Activated CD4-positive, alpha-beta memory T cell treated with anti-CD3 and anti-CD28 coated beads for 36 hours (primary cell): ENCODE measurements at regions of chr12 and their contacts with region 1.

Region 1: DNA sequence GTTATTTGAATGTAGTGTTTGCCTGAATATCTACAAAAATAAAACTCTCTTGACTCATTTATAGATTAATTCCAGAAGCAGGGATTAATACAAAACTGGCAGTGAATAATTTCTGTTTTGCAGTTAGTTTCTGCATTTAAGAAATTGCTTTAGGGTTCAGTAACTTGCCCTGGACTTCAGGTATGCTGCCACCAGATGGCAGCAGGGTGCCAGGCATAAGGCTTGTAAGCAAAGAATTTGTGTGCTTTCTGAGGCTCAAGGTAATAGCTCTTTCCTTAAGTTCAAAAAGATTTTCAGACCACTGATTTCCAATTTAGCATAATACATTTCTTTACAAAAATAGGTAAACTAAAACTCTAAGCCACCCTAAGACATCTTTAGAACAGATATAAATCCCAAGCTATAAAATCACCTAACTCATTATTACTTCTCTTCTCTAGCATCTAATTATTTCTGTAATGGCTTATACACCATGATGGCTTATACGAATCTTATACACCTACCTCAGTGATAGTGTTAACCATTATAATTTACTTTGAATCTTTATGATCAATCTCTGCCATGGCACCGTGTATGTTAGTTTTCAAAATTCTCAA is 398.3 kb downstream of the APAF1 start:
- DNase-seq: peak; percentile 62
- H3K4me3 Mint-ChIP-seq: no peak overlapping the region
- H3K27ac Mint-ChIP-seq: no peak overlapping the region
- H3K4me1 Mint-ChIP-seq: no peaks in the 10 kb centered on the region
- H3K27me3 Mint-ChIP-seq: peaks cover 3% of the 10 kb centered on the region

Region 2: GRCh38 chr12:98968896-98969295 is 74.5 kb before region 1 on chr12:
- CTCF ChIA-PET with region 1: no interaction called
- POLR2A ChIA-PET with region 1: no interaction called
- intact Hi-C with region 1: no loop called
- DNase-seq: no peak
- H3K4me3 Mint-ChIP-seq: no peak overlapping the region
- H3K27ac Mint-ChIP-seq: no peak overlapping the region
- H3K4me1 Mint-ChIP-seq: no peaks in the 10 kb centered on the region
- H3K27me3 Mint-ChIP-seq: no peaks in the 10 kb centered on the region

Region 3: GRCh38 chr12:99053616-99054362 is 10.4 kb after region 1 on chr12:
- CTCF ChIA-PET with region 1: interaction called, 14 read pairs
- POLR2A ChIA-PET with region 1: no interaction called
- intact Hi-C with region 1: no loop called
- DNase-seq: no peak
- H3K4me3 Mint-ChIP-seq: no peak overlapping the region
- H3K27ac Mint-ChIP-seq: no peak overlapping the region
- H3K4me1 Mint-ChIP-seq: no peaks in the 10 kb centered on the region
- H3K27me3 Mint-ChIP-seq: no peaks in the 10 kb centered on the region

Region 4: DNA sequence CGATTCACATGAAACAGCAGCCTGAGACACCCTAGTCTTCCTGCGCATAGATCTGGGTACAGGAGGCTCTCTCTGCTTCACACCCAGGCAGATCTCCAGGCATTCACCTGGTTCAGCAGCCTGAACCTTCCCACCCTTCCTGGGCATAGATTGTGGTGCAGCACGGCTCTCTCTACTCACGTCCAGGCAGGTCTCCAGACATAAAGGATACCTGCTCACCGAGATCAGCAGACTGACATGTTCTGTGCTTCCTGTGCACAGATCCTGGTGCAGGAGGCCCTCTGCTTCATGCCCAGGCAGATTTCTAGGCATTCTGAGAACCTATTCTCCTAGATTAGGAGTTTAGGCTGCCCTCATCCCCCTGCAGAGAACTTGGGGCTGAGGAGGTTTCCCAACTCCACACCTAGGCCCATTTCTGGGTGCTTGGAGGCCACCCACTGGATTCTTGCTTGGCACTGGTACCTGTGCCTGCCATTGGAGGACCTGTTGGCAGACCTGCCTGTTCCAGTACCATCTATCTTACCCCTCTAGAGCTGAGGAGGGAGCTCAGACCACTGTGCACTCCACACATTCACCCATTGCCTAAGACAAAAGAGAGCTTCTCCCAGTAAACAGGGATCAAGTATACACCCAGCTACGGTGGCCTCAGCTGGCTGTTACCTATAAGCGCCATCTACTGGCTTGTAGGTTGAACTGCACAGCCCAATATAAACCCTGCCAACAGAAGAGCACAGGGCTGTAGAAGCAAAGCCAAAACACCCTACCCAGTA is 576.2 kb after region 1 on chr12:
- CTCF ChIA-PET with region 1: no interaction called
- POLR2A ChIA-PET with region 1: no interaction called
- intact Hi-C with region 1: loop called (anchors 2 kb)
- DNase-seq: no peak
- H3K4me3 Mint-ChIP-seq: no peak overlapping the region
- H3K27ac Mint-ChIP-seq: no peak overlapping the region
- H3K4me1 Mint-ChIP-seq: no peaks in the 10 kb centered on the region
- H3K27me3 Mint-ChIP-seq: no peaks in the 10 kb centered on the region

Region 5: GRCh38 chr12:99767809-99768208 is 724.4 kb after region 1 on chr12:
- CTCF ChIA-PET with region 1: interaction called, 9 read pairs
- POLR2A ChIA-PET with region 1: no interaction called
- intact Hi-C with region 1: loop called (anchors 5 kb)
- DNase-seq: no peak
- H3K4me3 Mint-ChIP-seq: no peak overlapping the region
- H3K27ac Mint-ChIP-seq: no peak overlapping the region
- H3K4me1 Mint-ChIP-seq: no peaks in the 10 kb centered on the region
- H3K27me3 Mint-ChIP-seq: no peaks in the 10 kb centered on the region

Region 6: DNA sequence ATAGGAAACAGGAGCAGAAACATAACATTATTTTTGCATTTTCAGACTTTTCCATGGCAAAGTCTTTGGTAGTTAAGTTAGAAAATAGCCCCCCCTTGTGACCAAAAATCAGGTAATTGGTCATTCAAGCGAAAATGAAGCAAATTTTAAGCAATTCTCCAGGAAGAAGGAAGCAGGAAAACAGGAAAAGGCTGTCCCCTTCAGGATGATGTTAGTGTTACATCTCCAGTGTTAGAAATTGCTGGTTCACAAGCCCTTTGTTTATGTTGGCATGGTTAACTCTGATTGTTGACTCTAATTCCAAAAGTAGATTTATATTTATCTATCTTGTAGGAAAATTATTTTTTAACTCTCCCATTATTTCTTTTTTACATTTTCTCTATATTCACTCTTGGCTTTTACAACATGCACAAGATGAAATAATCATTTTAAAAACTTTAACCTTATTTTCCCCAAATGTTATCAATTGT is 1511.2 kb after region 1 on chr12:
- CTCF ChIA-PET with region 1: no interaction called
- POLR2A ChIA-PET with region 1: no interaction called
- intact Hi-C with region 1: loop called (anchors 2 kb)
- DNase-seq: no peak
- H3K4me3 Mint-ChIP-seq: no peak overlapping the region
- H3K27ac Mint-ChIP-seq: no peak overlapping the region
- H3K4me1 Mint-ChIP-seq: no peaks in the 10 kb centered on the region
- H3K27me3 Mint-ChIP-seq: peaks cover 2% of the 10 kb centered on the region